ENCODE measurements at regions of chr3 and their contacts with region 1.

Region 1: DNA sequence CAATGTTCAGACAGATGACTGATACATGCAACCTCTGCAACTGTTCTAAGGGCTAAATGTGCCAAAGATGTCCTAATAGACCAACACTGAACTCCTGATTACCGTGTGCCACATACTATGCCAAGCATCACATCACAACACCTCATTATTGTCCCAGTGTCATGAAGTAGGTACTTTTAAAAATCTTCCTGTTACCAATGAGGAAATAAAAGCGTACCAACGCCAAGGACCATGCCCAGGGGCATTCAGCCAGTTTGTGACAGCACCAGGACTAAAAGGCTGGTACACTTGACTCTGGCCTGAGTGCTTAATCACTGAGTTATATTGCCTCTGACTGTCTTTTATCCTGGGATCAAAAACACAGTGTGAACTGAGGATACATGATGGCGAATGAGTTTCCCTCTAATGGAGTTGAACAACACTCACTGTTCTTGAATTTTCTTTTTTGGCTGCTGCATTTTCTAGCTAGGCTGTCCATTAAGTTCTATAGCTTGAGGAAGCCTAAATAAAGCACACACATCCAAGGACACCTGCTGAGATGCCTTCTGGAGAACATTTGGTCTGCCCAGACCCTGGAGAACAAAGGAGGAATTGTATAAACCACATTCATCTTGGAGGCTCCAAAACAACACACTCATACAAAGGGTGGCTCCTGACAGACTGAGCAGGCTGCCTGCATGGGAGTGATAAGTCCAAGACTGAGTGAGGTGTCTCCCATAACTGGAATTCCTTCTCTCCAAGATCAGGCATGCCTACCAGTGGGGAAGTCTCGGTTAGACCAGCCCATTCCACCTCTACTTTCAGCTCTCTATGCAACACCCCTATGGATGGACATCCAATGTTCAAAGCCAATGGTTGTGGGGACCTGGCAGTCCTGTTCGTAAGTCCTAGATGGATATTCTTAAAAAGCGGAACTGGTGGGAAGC is 126.7 kb upstream of the PRICKLE2 start:
- DNase-seq: no peak

Region 2: GRCh38 chr3:64311424-64311976 is 40.5 kb before region 1 on chr3:
- intact Hi-C with region 1: loop called (anchors 5 kb)
- DNase-seq: no peak

Region 3: GRCh38 chr3:64489361-64490044 is 137.5 kb after region 1 on chr3:
- intact Hi-C with region 1: no loop called
- DNase-seq: no peak

Region 4: DNA sequence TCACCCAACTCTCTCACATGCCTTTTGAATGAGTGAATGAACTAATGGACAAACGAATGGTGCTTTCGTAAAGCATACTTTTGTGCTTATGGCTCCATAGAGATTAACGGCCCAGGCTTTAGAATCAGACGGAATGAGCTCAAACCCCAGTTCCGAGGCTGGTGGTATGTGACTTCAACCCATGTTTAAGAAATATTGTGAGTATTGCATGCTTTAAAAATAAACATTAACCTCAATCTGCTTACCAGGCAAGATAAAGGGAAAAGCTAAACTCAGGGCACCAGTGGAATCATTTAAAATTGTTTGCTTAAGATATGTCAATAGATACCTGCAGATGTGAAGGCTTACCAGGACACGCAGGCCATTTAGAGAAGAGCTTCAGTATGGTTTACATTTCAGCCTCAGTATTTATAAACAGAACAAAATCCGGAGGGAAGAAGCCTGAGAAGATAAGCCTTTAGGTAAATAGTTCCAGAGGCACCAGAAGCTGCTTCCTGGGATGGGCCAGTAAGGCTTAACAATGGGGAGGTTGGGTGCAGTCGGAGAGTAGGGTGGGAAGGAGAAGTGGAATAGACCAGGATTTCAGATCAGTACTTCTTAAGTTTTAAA is 149.4 kb after region 1 on chr3:
- intact Hi-C with region 1: no loop called
- DNase-seq: no peak

Region 5: GRCh38 chr3:64739971-64740631 is 388.1 kb after region 1 on chr3:
- intact Hi-C with region 1: no loop called
- DNase-seq: no peak

Measured in cardiac septum (tissue), 1 donor.